H1 (cell line): ENCODE measurements at regions of chr13 and their contacts with region 1.

Region 1: DNA sequence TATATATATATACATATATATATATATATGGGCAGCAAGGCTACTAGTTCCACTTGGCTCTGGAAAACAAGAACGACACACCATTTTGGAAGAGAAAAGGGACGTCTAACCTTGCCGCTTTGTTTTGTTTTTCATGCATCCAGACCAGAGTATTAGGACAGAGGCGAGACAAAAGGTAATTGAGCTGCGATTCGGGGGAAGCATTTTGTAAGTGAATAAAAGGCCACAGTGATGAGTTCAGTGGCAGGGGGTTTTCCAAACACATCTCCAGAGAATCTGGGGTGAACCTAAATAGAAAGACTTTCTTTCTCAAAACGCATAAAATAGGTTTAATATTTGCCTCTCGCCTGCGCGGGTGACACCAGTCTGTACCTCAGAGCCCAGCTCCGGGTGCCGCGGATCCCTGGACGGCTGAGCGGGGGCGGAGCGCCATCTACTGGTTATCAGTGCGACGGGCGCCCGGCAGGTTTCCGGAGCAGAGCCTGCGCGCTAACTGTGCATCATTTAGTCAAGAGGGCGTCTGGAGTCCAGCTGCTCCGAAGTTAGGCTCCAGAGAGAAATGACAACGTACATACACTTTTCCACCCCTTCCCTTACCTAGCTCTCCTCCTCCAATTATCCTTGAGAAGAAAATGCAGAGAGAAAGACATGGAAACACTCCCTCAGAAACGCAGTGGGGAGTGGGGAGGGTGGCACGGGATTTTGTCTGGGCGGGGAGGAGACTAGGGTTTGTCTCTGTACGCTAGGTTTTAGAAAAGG is 262.3 kb downstream of the TBC1D4 start:
- DNase-seq: peak; percentile 38 to 97
- H3K4me3 ChIP-seq: peak overlapping the region in 3 of 4 experiments; percentile 10 to 55 (median 27); a peak in 5 of 8 replicates
- H3K27ac ChIP-seq: no peak overlapping the region
- H3K4me1 ChIP-seq: no peaks in the 10 kb centered on the region; a peak in 1 of 7 replicates
- H3K27me3 ChIP-seq: no peaks in the 10 kb centered on the region
- CTCF ChIP-seq: peak; percentile 86 to 94 (median 88)
- EP300 ChIP-seq: 0 out of 3 replicates have a peak, but pooled peaks of 1 of the 2 experiments have one; percentile 36
- POLR2A ChIP-seq: no peak
- RAD21 ChIP-seq: peak; percentile 99

Region 2: GRCh38 chr13:74573654-74574053 is 646.0 kb before region 1 on chr13:
- CTCF ChIA-PET with region 1: interaction called, 12 read pairs
- POLR2A ChIA-PET with region 1: no interaction called
- DNase-seq: peak in 1 of 2 experiments; percentile 68
- H3K4me3 ChIP-seq: no peak overlapping the region
- H3K27ac ChIP-seq: no peak overlapping the region
- H3K4me1 ChIP-seq: peaks cover 0 to 6% (median 1%) of the 10 kb centered on the region in 4 experiments; a peak in 2 of 7 replicates
- H3K27me3 ChIP-seq: peaks cover 0 to 9% (median 2%) of the 10 kb centered on the region in 4 experiments; a peak in 5 of 7 replicates
- CTCF ChIP-seq: peak; percentile 71 to 75 (median 74)
- EP300 ChIP-seq: no peak
- POLR2A ChIP-seq: no peak
- RAD21 ChIP-seq: peak; percentile 87 to 89

Region 3: GRCh38 chr13:75050419-75051046 is 169.1 kb before region 1 on chr13:
- CTCF ChIA-PET with region 1: no interaction called
- POLR2A ChIA-PET with region 1: no interaction called
- DNase-seq: no peak
- H3K4me3 ChIP-seq: no peak overlapping the region
- H3K27ac ChIP-seq: no peak overlapping the region
- H3K4me1 ChIP-seq: no peaks in the 10 kb centered on the region
- H3K27me3 ChIP-seq: no peaks in the 10 kb centered on the region
- CTCF ChIP-seq: no peak
- EP300 ChIP-seq: no peak
- POLR2A ChIP-seq: no peak
- RAD21 ChIP-seq: no peak

Region 4: DNA sequence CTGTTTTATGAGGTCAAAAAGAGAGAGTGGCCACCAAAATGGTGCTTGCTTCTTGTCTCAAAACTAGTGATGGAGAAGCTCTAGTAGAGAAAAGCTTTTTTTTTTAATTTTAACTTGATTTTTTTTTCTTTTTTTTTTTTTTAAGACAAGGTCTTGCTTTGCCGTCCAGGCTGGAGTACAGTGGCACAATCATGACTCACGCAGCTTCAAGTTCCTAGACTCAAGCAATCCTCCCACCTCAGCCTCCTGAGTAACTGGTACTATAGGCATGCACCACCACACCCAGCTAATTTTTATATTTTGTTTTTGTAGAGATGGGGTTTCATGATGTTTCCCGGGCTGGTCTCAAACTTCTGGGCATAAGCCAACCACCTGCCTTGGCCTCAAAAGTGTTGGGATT is 16.7 kb before region 1 on chr13:
- CTCF ChIA-PET with region 1: interaction called, 12 read pairs
- POLR2A ChIA-PET with region 1: no interaction called
- DNase-seq: no peak
- H3K4me3 ChIP-seq: no peak overlapping the region
- H3K27ac ChIP-seq: no peak overlapping the region
- H3K4me1 ChIP-seq: no peaks in the 10 kb centered on the region
- H3K27me3 ChIP-seq: no peaks in the 10 kb centered on the region
- CTCF ChIP-seq: no peak
- EP300 ChIP-seq: no peak
- POLR2A ChIP-seq: no peak
- RAD21 ChIP-seq: no peak

Region 5: DNA sequence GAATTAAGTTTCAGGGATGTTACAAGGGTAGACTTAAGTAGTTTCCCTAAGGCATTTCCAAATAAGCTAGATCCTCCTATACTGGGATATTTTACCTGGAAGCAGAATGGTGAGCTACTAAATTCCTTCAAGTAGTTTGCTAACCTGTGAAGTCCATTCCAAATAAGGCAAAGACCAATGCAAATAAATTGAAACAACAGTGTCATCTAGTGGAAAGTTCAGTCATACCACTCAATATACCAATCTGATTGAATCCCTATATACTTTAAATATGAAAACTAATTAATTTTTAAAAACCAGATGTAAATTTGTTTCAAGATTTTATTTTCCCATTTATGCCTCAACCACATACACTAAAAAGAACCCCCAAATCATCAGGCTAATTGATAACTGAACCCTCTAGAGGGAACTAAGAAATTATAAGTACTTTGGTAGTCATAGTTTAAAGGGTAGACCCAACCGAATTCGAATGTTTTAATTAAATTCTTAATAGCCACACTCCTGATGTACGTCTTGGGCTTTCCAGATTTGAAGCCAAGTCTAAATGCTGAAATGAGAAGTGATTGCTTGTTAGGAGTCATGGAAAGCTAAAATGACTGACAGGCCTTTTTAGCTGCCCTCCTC is 38.6 kb after region 1 on chr13:
- CTCF ChIA-PET with region 1: interaction called, 11 read pairs
- POLR2A ChIA-PET with region 1: no interaction called
- DNase-seq: no peak
- H3K4me3 ChIP-seq: no peak overlapping the region
- H3K27ac ChIP-seq: no peak overlapping the region
- H3K4me1 ChIP-seq: no peaks in the 10 kb centered on the region
- H3K27me3 ChIP-seq: no peaks in the 10 kb centered on the region; a peak in 1 of 7 replicates
- CTCF ChIP-seq: peak in 2 of 3 experiments; percentile 45 to 56; a peak in 2 of 4 replicates
- EP300 ChIP-seq: no peak
- POLR2A ChIP-seq: no peak
- RAD21 ChIP-seq: peak; percentile 75 to 85